ENCODE measurements at regions of chr7 and their contacts with region 1.

Region 1: GRCh38 chr7:23347682-23348180 is 48.6 kb downstream of the MALSU1 start:
- DNase-seq: no peak
- ATAC-seq: no peak
- H3K4me3 Mint-ChIP-seq: no peak overlapping the region
- H3K27ac Mint-ChIP-seq: no peak overlapping the region
- H3K4me1 Mint-ChIP-seq: peaks cover 29% of the 10 kb centered on the region
- H3K27me3 Mint-ChIP-seq: peaks cover 10% of the 10 kb centered on the region

Region 2: GRCh38 chr7:23298885-23299769 is 48.6 kb before region 1 on chr7 and contains the start of gene MALSU1:
- CTCF ChIA-PET with region 1: interaction called, 6 read pairs
- POLR2A ChIA-PET with region 1: interaction called, 16 read pairs
- DNase-seq: peak; percentile 98
- ATAC-seq: peak; percentile 100
- H3K4me3 Mint-ChIP-seq: peak within 1 kb of the TSS; percentile 84
- H3K27ac Mint-ChIP-seq: peak within 1 kb of the TSS; percentile 89
- H3K4me1 Mint-ChIP-seq: peaks cover 35% of the 10 kb centered on the region
- H3K27me3 Mint-ChIP-seq: no peaks in the 10 kb centered on the region
- total RNA-seq, gene MALSU1: 53.3 to 55.0 TPM

Region 3: GRCh38 chr7:23373151-23374004 is 25.6 kb after region 1 on chr7:
- CTCF ChIA-PET with region 1: no interaction called
- POLR2A ChIA-PET with region 1: no interaction called
- DNase-seq: peak; percentile 52
- ATAC-seq: peak; percentile 68
- H3K4me3 Mint-ChIP-seq: peak overlapping the region; percentile 19
- H3K27ac Mint-ChIP-seq: no peak overlapping the region
- H3K4me1 Mint-ChIP-seq: peaks cover 35% of the 10 kb centered on the region
- H3K27me3 Mint-ChIP-seq: peaks cover 4% of the 10 kb centered on the region